ENCODE measurements at regions of chr4 and their contacts with region 1.

Region 1: DNA sequence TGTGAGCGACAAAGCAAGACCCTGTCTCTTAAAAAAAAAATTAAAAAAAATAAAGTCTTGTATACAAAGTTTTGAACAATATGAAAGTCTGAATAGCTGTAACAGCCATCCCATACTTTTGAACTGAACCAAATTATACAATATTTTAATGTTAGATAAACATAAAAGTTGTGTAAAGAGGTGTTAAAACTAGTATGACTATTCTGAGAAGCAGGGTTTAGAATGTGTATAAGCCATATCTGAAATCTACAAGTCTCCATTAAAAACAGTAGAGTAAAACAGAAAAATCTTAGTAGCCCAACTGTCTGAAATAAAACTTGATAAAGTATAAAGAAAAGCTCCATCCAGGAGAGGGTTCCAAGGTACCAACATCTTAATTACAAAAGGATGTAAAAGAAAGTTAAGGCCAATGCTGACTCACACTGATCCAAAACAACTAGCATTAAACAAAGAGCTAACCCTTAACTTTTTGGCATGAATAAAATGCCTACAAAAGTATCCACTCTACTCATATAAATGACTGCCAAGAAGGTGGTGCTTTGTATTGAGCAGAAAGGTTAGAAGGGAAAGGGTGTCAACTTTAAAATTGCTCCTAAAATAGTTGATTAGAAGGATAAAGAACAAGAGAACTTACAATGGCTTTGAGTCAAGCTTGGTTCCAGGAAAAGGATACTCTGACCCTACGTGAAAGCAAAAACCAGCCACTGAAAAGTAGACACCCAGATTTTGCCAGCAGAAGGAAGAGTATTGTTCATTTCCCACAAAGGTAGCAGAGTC is 18.5 kb downstream of the CNOT6L start:
- DNase-seq: no peak
- ATAC-seq: peak; percentile 3
- H3K4me3 ChIP-seq: peak overlapping the region; percentile 33
- H3K4me3 Mint-ChIP-seq: peak overlapping the region; percentile 75
- H3K27ac ChIP-seq: peak overlapping the region in 1 of 2 donors; percentile 73
- H3K27ac Mint-ChIP-seq: peak overlapping the region; percentile 77
- H3K4me1 ChIP-seq: peaks cover 33% of the 10 kb centered on the region
- H3K4me1 Mint-ChIP-seq: peaks cover 88% of the 10 kb centered on the region
- H3K27me3 ChIP-seq: no peaks in the 10 kb centered on the region
- H3K27me3 Mint-ChIP-seq: no peaks in the 10 kb centered on the region
- CTCF ChIP-seq: no peak

Region 2: DNA sequence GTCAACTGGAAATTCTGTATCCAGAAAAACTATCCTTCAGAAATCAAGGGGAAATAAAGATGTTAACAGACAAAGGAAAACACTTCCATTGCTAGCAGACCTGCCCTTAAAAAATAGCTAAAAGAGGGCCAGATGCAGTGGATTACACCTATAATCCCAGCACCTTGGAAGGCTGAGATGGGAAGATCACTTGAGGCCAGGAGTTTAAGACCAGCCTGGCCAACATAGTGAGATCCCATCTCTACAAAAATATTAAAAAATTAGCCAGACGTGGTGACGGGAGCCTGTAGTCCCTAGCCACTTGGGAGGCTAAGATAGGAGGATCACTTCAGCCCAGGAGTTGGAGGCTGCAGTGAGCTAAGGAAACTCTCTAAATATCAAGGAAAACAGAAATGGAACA is 48.9 kb before region 1 on chr4:
- CTCF ChIA-PET with region 1: no interaction called
- POLR2A ChIA-PET with region 1: no interaction called
- intact Hi-C with region 1: loop called in 1 of 2 experiments (anchors 5 kb)
- DNase-seq: no peak
- ATAC-seq: no peak
- H3K4me3 ChIP-seq: no peak overlapping the region
- H3K4me3 Mint-ChIP-seq: no peak overlapping the region
- H3K27ac ChIP-seq: no peak overlapping the region
- H3K27ac Mint-ChIP-seq: no peak overlapping the region
- H3K4me1 ChIP-seq: no peaks in the 10 kb centered on the region
- H3K4me1 Mint-ChIP-seq: peaks cover 48% of the 10 kb centered on the region
- H3K27me3 ChIP-seq: no peaks in the 10 kb centered on the region
- H3K27me3 Mint-ChIP-seq: no peaks in the 10 kb centered on the region
- CTCF ChIP-seq: no peak